Endothelial cell of umbilical vein (primary cell): ENCODE measurements at regions of chr11 and their contacts with region 1.

Region 1: DNA sequence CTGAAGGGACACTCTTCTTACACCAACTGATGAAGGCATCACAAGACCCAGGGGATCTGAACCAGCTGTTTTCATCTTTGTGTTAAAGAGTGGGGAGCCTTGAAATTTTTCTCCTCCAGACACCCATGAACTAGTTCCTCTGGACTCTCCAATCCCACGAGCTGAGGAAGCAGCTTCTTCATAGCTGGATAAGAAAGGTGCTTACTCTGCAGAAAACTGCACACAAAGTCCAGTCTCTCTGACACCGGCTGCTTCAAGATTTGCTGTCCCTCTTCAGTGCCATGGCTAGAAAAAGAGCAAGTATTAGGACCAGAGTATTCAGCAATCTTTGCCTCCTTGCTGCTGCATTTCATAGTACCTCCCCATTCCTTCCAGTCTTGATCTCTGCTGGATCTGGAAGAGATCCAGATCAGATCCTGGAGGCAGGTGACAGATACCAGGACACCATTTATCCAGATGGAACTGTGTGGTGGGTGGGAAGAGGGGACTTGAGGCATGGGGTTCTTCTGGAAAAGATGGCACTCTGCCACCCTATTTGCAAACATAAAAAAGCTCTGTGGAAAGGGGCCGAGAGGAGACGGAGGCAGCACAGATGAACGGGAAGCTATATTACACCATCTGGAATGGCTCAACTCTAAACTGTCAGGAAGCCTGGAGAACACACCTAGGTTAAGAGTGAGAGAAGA is 25.5 kb downstream of the IL18BP start:
- DNase-seq: no peak
- H3K4me3 ChIP-seq: no peak overlapping the region
- H3K27ac ChIP-seq: no peak overlapping the region
- H3K4me1 ChIP-seq: peaks cover 6% of the 10 kb centered on the region
- H3K27me3 ChIP-seq: no peaks in the 10 kb centered on the region
- CTCF ChIP-seq: no peak
- POLR2A ChIP-seq: no peak

Region 2: DNA sequence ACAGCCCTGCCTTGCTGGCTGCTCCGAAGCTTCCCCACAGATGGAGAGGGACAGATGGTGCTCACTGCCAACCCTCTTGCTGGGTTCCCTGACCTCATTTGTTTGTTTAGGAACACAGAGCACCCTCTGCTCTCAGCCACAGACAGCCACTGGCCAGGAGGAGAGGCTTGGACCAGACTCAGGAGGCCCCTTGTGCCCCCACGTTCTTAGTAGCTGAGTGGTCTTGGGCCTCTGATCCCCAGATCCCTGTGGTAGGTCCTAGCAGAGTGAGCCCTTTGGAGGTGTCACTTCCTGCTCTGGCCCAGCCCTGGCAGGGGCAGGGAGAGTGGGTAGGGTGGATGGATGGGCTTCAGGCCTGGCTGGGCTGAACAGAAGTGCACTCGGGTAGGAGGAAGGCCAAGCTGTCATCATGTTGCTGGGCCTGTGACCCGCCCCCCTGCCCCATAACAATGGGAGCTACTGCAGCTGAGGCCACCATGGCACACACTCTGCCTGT is 660.0 kb before region 1 on chr11:
- CTCF ChIA-PET with region 1: no interaction called
- POLR2A ChIA-PET with region 1: no interaction called
- dilution Hi-C with region 1: no loop called
- intact Hi-C with region 1: no loop called
- DNase-seq: no peak
- H3K4me3 ChIP-seq: no peak overlapping the region
- H3K27ac ChIP-seq: no peak overlapping the region
- H3K4me1 ChIP-seq: no peaks in the 10 kb centered on the region
- H3K27me3 ChIP-seq: no peaks in the 10 kb centered on the region
- CTCF ChIP-seq: no peak
- POLR2A ChIP-seq: no peak

Region 3: DNA sequence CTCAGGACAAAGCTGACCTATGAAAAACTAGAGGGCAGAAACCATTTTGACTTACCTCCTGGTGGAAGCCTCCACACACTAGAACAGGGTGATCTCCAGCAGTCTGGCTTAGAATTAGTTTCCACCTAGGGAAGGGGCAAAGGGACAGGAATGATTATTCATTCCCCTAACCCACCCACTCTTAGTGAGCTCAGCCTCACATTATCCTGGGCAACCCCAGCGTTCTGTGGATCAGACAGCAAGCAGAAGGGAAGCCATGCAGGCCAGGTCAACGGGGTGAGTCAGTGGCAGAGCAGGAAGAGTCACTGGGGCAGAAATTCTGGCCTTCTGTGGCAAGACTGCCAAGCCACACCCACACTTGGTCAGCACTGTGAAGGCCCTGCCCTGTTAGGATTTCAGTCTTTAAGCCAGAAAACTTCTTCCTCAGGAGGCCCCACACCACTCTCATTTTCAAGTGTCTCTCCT is 45.6 kb after region 1 on chr11:
- CTCF ChIA-PET with region 1: interaction called, 46 read pairs
- POLR2A ChIA-PET with region 1: no interaction called
- dilution Hi-C with region 1: no loop called
- intact Hi-C with region 1: no loop called
- DNase-seq: peak; percentile 81
- H3K4me3 ChIP-seq: peak overlapping the region in 1 of 3 experiments; percentile 1
- H3K27ac ChIP-seq: peak overlapping the region; percentile 50
- H3K4me1 ChIP-seq: peaks cover 64% of the 10 kb centered on the region
- H3K27me3 ChIP-seq: no peaks in the 10 kb centered on the region
- CTCF ChIP-seq: no peak
- POLR2A ChIP-seq: peak; percentile 64

Region 4: GRCh38 chr11:72102946-72103753 is 78.9 kb after region 1 on chr11 and contains the start of gene LAMTOR1:
- CTCF ChIA-PET with region 1: interaction called, 35 read pairs
- POLR2A ChIA-PET with region 1: no interaction called
- dilution Hi-C with region 1: no loop called
- intact Hi-C with region 1: no loop called
- DNase-seq: peak; percentile 99
- H3K4me3 ChIP-seq: peak within 1 kb of the TSS; percentile 74 to 97 (median 86)
- H3K27ac ChIP-seq: peak within 1 kb of the TSS; percentile 88
- H3K4me1 ChIP-seq: peaks cover 26% of the 10 kb centered on the region
- H3K27me3 ChIP-seq: no peaks in the 10 kb centered on the region
- CTCF ChIP-seq: peak; percentile 34 to 38
- POLR2A ChIP-seq: peak; percentile 92
- total RNA-seq, gene LAMTOR1: 91.1 and 95.1 TPM in 2 replicates

Region 5: DNA sequence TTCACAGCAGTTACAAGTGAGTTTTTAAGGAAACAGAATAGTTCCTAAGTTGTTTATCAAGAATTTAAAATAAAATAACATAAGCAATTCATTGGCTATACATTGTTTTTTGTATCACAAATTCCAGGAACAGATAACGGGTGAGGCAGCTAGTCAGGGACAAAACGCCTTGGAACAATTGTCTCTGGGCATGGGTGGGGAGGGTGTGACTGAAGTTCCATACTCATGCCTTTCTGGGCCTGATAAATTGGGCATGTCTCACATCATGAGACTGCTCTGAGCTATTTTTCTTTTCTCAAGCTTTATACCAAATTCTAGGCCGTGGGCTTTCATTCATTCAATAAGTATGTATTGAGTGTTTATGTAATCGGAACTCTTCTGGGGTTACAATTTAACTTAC is 132.9 kb after region 1 on chr11:
- CTCF ChIA-PET with region 1: interaction called, 13 read pairs
- POLR2A ChIA-PET with region 1: no interaction called
- dilution Hi-C with region 1: no loop called
- intact Hi-C with region 1: no loop called
- DNase-seq: no peak
- H3K4me3 ChIP-seq: no peak overlapping the region
- H3K27ac ChIP-seq: no peak overlapping the region
- H3K4me1 ChIP-seq: no peaks in the 10 kb centered on the region
- H3K27me3 ChIP-seq: peaks cover 7 to 10% of the 10 kb centered on the region in 2 experiments
- CTCF ChIP-seq: no peak
- POLR2A ChIP-seq: no peak

Region 6: GRCh38 chr11:72222907-72223614 is 198.8 kb after region 1 on chr11:
- CTCF ChIA-PET with region 1: interaction called, 15 read pairs
- POLR2A ChIA-PET with region 1: no interaction called
- dilution Hi-C with region 1: no loop called
- intact Hi-C with region 1: loop called (anchors 1 kb)
- DNase-seq: peak; percentile 93
- H3K4me3 ChIP-seq: peak overlapping the region; percentile 62 to 94 (median 70)
- H3K27ac ChIP-seq: peak overlapping the region; percentile 60
- H3K4me1 ChIP-seq: peaks cover 9% of the 10 kb centered on the region
- H3K27me3 ChIP-seq: peaks cover 4 to 7% of the 10 kb centered on the region in 2 experiments
- CTCF ChIP-seq: peak in 1 of 2 donors; percentile 16
- POLR2A ChIP-seq: no peak